CD8-positive, alpha-beta memory T cell (primary cell): ENCODE measurements at regions of chr6 and their contacts with region 1.

Region 1: DNA sequence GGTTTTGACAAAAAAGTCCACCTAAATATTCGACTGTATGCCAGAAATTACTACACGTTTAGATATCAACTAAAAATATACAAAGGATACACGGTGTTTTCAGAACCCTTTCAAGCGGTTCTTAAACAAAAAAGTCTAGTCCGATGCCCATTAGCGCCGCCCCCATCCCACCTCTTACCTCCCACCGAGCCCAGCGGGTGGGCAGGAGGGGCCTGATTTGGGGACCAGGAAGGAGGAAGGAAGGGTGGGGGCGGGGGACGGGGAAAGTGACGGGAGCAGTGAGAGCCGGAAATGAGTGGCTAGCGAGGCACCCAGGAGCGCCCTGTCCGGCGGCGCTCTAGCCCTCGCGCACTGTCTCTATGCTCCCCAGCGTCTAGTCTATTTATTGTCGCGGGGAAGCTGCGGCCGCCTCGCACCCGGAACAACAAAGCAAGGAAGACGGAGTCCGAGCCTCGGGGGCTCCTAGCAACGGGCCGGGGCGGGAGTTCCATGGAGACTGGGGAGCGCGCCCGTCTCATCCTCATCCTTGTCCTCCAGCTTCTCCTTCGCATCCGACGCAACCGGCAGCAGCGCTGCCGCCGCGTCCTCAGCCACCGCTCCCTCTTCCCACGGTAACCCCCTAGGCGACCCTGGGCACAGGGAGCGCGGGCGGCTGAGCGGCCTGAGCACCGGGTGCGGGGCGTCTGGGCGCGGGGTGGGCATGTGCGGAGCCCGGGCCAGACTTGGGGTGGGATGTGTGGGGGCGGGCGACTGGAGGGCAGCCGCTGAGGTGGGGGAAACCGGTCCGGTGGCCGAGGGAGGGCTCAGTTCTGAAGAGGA is at the start of gene TBPL1:
- DNase-seq: peak; percentile 81 to 94 (median 87)
- H3K4me3 ChIP-seq: peak within 1 kb of the TSS; percentile 96
- H3K4me3 Mint-ChIP-seq: peak within 1 kb of the TSS; percentile 93 to 98 (median 96)
- H3K27ac ChIP-seq: peak within 1 kb of the TSS; percentile 75
- H3K27ac Mint-ChIP-seq: peak within 1 kb of the TSS; percentile 90 to 98 (median 94)
- H3K4me1 ChIP-seq: peaks cover 44% of the 10 kb centered on the region
- H3K4me1 Mint-ChIP-seq: peaks cover 43 to 53% (median 50%) of the 10 kb centered on the region in 3 donors
- H3K27me3 ChIP-seq: no peaks in the 10 kb centered on the region
- H3K27me3 Mint-ChIP-seq: no peaks in the 10 kb centered on the region
- total RNA-seq, gene TBPL1: 51.9 to 52.8 TPM

Region 2: DNA sequence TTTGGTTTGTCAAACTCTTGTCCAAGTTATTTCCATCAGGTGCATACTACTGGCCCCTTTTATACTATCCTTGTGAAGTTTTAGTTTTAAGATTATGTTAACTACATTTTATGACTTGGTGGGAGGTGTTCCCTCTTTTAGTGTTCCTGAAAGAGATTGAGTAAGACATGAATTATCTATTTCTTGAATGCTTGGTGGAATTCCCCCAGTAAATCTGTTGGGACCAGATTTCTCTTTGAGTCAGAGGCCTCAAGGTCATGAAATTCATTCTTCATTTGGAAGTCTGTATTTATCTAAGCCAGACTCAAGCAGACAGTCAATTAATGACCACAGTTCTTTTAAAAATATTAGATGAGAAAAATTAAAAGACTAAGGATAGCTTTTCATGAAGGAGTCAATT is 1633.0 kb before region 1 on chr6:
- CTCF ChIA-PET with region 1: no interaction called
- POLR2A ChIA-PET with region 1: no interaction called
- DNase-seq: no peak
- H3K4me3 ChIP-seq: no peak overlapping the region
- H3K4me3 Mint-ChIP-seq: no peak overlapping the region
- H3K27ac ChIP-seq: no peak overlapping the region
- H3K27ac Mint-ChIP-seq: no peak overlapping the region
- H3K4me1 ChIP-seq: no peaks in the 10 kb centered on the region
- H3K4me1 Mint-ChIP-seq: no peaks in the 10 kb centered on the region
- H3K27me3 ChIP-seq: no peaks in the 10 kb centered on the region
- H3K27me3 Mint-ChIP-seq: peaks cover 3 to 17% of the 10 kb centered on the region in 2 donors

Region 3: DNA sequence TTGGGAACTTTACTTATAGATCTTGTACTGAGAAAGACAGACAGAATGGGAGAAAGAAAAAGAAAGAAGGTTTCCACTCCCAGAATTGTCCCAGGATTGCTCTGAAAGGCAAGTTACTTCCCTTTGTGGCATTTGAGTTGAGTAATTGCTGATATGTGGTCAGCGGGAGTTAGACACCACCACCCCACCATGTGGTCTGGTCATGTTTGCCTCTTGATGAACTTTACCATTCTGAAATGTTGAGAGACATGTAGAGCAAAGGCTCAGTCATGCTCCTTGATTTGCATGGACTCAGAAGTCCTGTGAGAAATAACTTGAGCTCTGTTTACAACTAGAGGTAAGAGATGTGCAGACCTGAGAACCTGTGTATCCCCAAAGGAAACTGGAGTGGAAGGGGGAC is 47.0 kb before region 1 on chr6:
- CTCF ChIA-PET with region 1: no interaction called
- POLR2A ChIA-PET with region 1: no interaction called
- DNase-seq: no peak
- H3K4me3 ChIP-seq: no peak overlapping the region
- H3K4me3 Mint-ChIP-seq: no peak overlapping the region
- H3K27ac ChIP-seq: no peak overlapping the region
- H3K27ac Mint-ChIP-seq: no peak overlapping the region
- H3K4me1 ChIP-seq: no peaks in the 10 kb centered on the region
- H3K4me1 Mint-ChIP-seq: no peaks in the 10 kb centered on the region
- H3K27me3 ChIP-seq: peaks cover 5% of the 10 kb centered on the region
- H3K27me3 Mint-ChIP-seq: peaks cover 32 to 79% of the 10 kb centered on the region in 2 donors

Region 4: GRCh38 chr6:133973109-133973971 is 20.3 kb after region 1 on chr6:
- CTCF ChIA-PET with region 1: interaction called, 10 read pairs
- POLR2A ChIA-PET with region 1: interaction called, 3 read pairs
- DNase-seq: peak in 2 of 5 donors; percentile 26 to 39
- H3K4me3 ChIP-seq: no peak overlapping the region
- H3K4me3 Mint-ChIP-seq: no peak overlapping the region
- H3K27ac ChIP-seq: no peak overlapping the region
- H3K27ac Mint-ChIP-seq: peak overlapping the region in 5 of 8 donors; percentile 9 to 73 (median 12)
- H3K4me1 ChIP-seq: peaks cover 20% of the 10 kb centered on the region
- H3K4me1 Mint-ChIP-seq: peaks cover 49 to 82% (median 69%) of the 10 kb centered on the region in 3 donors
- H3K27me3 ChIP-seq: no peaks in the 10 kb centered on the region
- H3K27me3 Mint-ChIP-seq: no peaks in the 10 kb centered on the region

Region 5: DNA sequence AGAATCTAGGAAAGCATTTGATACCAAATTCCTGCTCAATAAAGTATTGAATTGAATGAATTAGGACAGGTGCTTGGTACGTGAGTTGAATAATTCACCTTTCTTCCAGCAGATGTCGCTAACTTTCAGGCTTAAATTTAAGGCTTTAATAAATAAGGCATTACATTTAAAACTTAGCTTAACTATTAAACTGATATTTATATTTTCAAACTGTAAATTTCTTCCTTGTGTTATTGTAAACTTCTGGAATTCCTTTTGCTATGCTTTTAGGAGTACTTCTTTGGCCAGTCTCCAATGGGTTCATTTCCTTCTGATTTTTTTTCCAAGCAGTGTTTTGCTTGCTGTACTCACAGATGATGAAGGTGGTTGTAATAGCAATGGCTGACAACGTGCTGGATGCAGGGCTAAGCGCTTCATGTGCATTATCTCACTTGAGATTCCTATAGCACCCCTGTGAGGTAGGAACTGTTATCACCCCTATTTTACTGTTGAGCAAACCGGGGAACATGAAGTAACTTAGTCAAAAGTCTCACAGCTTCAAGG is 170.7 kb after region 1 on chr6:
- CTCF ChIA-PET with region 1: no interaction called
- POLR2A ChIA-PET with region 1: no interaction called
- DNase-seq: peak in 3 of 5 donors; percentile 7 to 28 (median 18)
- H3K4me3 ChIP-seq: no peak overlapping the region
- H3K4me3 Mint-ChIP-seq: peak overlapping the region in 1 of 7 donors; percentile 54
- H3K27ac ChIP-seq: no peak overlapping the region
- H3K27ac Mint-ChIP-seq: peak overlapping the region in 2 of 8 donors; percentile 35 to 83
- H3K4me1 ChIP-seq: no peaks in the 10 kb centered on the region
- H3K4me1 Mint-ChIP-seq: peaks cover 0 to 4% (median 3%) of the 10 kb centered on the region in 3 donors
- H3K27me3 ChIP-seq: no peaks in the 10 kb centered on the region
- H3K27me3 Mint-ChIP-seq: peaks cover 1 to 11% of the 10 kb centered on the region in 2 donors